ENCODE measurements at regions of chr2 and their contacts with region 1.

Region 1: DNA sequence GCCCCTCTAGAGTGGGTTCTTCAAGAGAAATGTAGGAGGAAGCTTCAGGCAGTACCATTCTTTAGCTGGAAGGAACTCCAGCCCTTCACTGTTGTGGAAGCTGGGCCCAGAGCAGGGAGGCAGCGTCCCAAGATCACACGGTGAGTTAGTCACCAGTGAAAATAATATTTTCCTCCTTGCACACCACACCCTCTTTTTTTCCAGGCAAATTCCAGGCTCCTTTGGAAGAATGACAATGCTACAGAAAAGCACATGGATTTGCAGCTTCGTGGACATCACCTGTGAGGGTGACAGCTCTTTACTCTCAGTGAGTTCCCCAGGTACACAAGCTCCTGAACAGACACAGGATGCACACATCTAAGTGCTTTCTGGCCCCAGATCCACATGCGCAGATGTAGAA is 157.1 kb downstream of the COL6A3 start:
- DNase-seq: no peak
- H3K4me3 Mint-ChIP-seq: no peak overlapping the region
- H3K27ac Mint-ChIP-seq: no peak overlapping the region
- H3K4me1 Mint-ChIP-seq: peaks cover 23% of the 10 kb centered on the region
- H3K27me3 Mint-ChIP-seq: no peaks in the 10 kb centered on the region
- CTCF ChIP-seq: no peak

Region 2: GRCh38 chr2:237045432-237045831 is 211.5 kb before region 1 on chr2:
- CTCF ChIA-PET with region 1: no interaction called
- POLR2A ChIA-PET with region 1: no interaction called
- intact Hi-C with region 1: no loop called
- DNase-seq: no peak
- H3K4me3 Mint-ChIP-seq: no peak overlapping the region
- H3K27ac Mint-ChIP-seq: no peak overlapping the region
- H3K4me1 Mint-ChIP-seq: no peaks in the 10 kb centered on the region
- H3K27me3 Mint-ChIP-seq: peaks cover 8% of the 10 kb centered on the region
- CTCF ChIP-seq: no peak

Region 3: GRCh38 chr2:237244976-237245646 is 11.8 kb before region 1 on chr2:
- CTCF ChIA-PET with region 1: interaction called, 4 read pairs
- POLR2A ChIA-PET with region 1: interaction called, 25 read pairs
- intact Hi-C with region 1: no loop called
- DNase-seq: peak; percentile 81
- H3K4me3 Mint-ChIP-seq: no peak overlapping the region
- H3K27ac Mint-ChIP-seq: peak overlapping the region; percentile 94
- H3K4me1 Mint-ChIP-seq: peaks cover 32% of the 10 kb centered on the region
- H3K27me3 Mint-ChIP-seq: no peaks in the 10 kb centered on the region
- CTCF ChIP-seq: no peak

Region 4: GRCh38 chr2:237305579-237305978 is 48.7 kb after region 1 on chr2:
- CTCF ChIA-PET with region 1: no interaction called
- POLR2A ChIA-PET with region 1: no interaction called
- intact Hi-C with region 1: no loop called
- DNase-seq: no peak
- H3K4me3 Mint-ChIP-seq: no peak overlapping the region
- H3K27ac Mint-ChIP-seq: no peak overlapping the region
- H3K4me1 Mint-ChIP-seq: peaks cover 37% of the 10 kb centered on the region
- H3K27me3 Mint-ChIP-seq: no peaks in the 10 kb centered on the region
- CTCF ChIP-seq: no peak